ENCODE measurements at regions of chr14 and their contacts with region 1.

Region 1: GRCh38 chr14:78959674-78960264 is 789.6 kb downstream of the NRXN3 start:
- DNase-seq: peak; percentile 74 to 80 (median 75)
- ATAC-seq: peak; percentile 89
- H3K4me3 ChIP-seq: no peak overlapping the region
- H3K27ac ChIP-seq: no peak overlapping the region
- H3K4me1 ChIP-seq: no peaks in the 10 kb centered on the region
- H3K27me3 ChIP-seq: no peaks in the 10 kb centered on the region
- CTCF ChIP-seq: peak; percentile 37 to 95 (median 68)
- POLR2A ChIP-seq: no peak

Region 2: DNA sequence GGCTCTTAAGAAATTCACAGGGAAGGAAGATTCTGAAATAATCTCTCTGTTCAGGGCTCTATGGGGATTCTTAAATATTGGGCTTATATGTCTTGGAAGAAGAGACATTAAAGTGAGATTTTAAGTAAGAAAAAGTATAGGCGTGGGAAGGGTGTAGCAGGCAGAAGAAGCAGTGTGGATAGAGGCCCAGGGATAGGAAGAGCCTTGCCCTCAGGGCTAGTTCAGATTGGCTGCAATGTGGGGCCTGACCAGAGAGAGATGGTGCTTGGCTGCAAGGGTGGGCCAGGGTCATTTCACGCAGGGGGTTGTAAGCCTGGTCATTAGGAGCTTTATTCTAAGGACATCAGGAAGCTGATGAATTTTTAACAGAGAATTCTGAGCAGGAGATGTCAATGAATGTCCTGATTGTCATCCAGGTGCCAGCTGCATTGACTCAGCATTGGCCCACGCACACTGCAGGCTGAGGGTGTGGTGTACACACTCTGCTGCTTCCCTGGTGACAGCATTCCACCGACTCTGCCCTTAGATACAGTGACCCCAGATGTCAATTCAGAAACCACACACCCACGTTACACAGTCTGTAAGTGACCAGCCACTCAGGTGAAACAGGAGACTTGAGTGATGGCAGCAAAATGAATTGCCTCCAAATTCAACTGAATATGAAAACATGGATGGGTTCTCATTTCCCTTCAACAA is 207.1 kb before region 1 on chr14:
- intact Hi-C with region 1: no loop called
- DNase-seq: peak; percentile 27 to 46 (median 38)
- ATAC-seq: peak; percentile 85
- H3K4me3 ChIP-seq: no peak overlapping the region
- H3K27ac ChIP-seq: peak overlapping the region in 1 of 4 donors; percentile 20
- H3K4me1 ChIP-seq: no peaks in the 10 kb centered on the region
- H3K27me3 ChIP-seq: no peaks in the 10 kb centered on the region
- CTCF ChIP-seq: no peak
- POLR2A ChIP-seq: no peak

Region 3: DNA sequence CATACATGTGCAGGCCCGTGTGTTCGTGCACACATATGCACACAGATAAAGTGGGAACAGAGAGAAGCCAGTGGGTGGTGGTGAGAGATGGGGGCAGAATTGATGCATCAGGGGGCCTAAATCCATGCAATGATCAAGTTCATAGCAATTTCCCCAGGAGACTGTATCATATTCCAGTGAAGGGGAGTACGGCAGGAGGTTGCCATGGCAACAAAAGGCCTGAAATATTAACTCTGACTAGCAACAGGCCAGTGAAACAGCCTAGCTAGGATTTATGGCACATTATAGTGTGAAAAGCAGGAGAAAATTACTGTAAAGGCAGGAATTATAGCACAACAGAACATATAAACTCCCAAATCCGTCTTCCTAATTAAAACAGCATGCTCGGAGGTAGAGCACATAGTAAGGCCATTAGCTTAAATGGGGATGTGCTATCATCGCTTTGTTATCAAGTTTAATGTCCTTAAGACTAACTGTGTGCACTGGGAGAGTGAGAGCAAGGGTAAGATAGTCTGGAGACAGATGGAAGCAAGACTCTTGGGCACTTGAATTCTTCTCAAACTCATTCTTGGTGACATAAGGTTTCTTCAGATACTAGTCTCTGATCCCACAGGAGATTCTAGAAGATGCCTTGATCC is 445.2 kb after region 1 on chr14:
- intact Hi-C with region 1: no loop called
- DNase-seq: no peak
- ATAC-seq: no peak
- H3K4me3 ChIP-seq: no peak overlapping the region
- H3K27ac ChIP-seq: no peak overlapping the region
- H3K4me1 ChIP-seq: no peaks in the 10 kb centered on the region
- H3K27me3 ChIP-seq: no peaks in the 10 kb centered on the region
- CTCF ChIP-seq: no peak
- POLR2A ChIP-seq: no peak

Region 4: GRCh38 chr14:80845856-80846255 is 1886.1 kb after region 1 on chr14:
- intact Hi-C with region 1: loop called (anchors 10 kb)
- DNase-seq: no peak
- ATAC-seq: no peak
- H3K4me3 ChIP-seq: no peak overlapping the region
- H3K27ac ChIP-seq: no peak overlapping the region
- H3K4me1 ChIP-seq: no peaks in the 10 kb centered on the region
- H3K27me3 ChIP-seq: no peaks in the 10 kb centered on the region
- CTCF ChIP-seq: no peak
- POLR2A ChIP-seq: no peak